KBM-7 (cell line): ENCODE measurements at regions of chr13 and their contacts with region 1.

Region 1: GRCh38 chr13:19153782-19154450 is 27.7 kb downstream of the TUBA3C start:
- DNase-seq: peak; percentile 15

Region 2: GRCh38 chr13:19266979-19267378 is 113.1 kb after region 1 on chr13:
- in situ Hi-C with region 1: loop called (anchors 25 kb)
- DNase-seq: peak; percentile 72

Region 3: GRCh38 chr13:19345158-19345557 is 191.2 kb after region 1 on chr13:
- in situ Hi-C with region 1: no loop called
- DNase-seq: no peak

Region 4: GRCh38 chr13:19402625-19403024 is 248.7 kb after region 1 on chr13:
- in situ Hi-C with region 1: loop called (anchors 25 kb)
- DNase-seq: no peak

Region 5: DNA sequence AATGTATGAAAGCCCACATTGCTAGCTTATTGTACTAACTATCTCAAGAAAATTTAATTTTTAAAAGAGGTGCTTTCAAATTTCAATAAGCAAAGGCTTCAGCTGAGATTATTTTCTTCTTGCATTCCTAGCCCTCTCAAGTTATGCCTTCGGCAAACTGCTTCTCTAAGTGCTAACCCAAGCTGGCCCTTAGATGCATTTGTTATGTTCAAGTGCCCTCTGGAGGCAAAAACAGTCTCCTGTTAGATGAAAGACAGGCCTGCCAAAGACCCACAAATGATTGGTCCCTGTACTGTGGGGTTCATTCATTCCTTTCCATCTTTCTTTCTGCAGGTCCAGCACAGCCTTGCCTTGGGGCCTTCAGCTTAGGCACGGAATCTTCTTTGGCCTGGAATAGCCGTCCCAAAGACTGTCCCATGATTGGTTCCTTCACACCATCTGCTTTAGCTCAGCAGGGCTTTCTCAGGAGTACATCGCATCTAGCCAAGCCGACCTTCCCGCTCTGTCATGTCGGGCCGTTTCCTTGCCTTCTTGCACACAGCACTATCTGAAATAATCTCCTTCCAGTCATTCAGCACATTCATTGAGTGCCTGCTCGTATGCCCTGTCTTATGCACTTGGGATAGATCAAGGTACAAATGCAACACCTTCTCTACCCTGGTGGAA is 433.9 kb after region 1 on chr13:
- in situ Hi-C with region 1: loop called (anchors 25 kb)
- DNase-seq: peak; percentile 77